ENCODE measurements at regions of chr1 and their contacts with region 1.

Region 1: GRCh38 chr1:248807067-248807737 is 18.5 kb downstream of the SH3BP5L start:
- DNase-seq: peak; percentile 68 to 75 (median 74)
- H3K4me3 ChIP-seq: peak overlapping the region in 1 of 3 experiments; percentile 70
- H3K4me3 Mint-ChIP-seq: peak overlapping the region in 1 of 2 donors; percentile 39
- H3K27ac ChIP-seq: peak overlapping the region; percentile 86 to 89
- H3K27ac Mint-ChIP-seq: peak overlapping the region; percentile 31 to 98 (median 76)
- H3K4me1 ChIP-seq: peaks cover 67 to 71% of the 10 kb centered on the region in 2 donors
- H3K4me1 Mint-ChIP-seq: peaks cover 68% of the 10 kb centered on the region
- H3K27me3 ChIP-seq: no peaks in the 10 kb centered on the region
- H3K27me3 Mint-ChIP-seq: no peaks in the 10 kb centered on the region
- CTCF ChIP-seq: peak; percentile 93

Region 2: DNA sequence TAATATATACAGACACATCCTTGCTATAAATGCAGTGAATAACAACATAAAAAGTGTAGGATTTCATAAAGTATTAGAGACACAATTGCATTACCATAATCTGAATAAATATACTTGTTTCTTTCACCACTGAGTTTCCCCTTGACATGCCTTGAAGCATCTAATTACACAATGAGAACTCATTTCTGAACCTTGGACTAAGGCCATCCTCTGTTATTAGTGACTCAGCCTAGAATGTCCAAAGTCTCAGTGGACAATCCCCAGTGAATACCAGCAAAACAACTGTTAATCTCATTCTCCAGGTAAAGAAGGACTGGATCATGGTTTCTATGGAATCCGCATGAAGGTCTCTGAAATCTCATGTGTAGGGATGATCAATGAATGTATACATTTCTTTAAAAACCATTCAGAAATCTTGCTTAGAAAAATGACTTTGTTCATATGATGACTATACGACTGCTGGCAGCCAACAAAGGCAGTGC is 793.9 kb before region 1 on chr1 and contains the start of gene OR2L5:
- intact Hi-C with region 1: no loop called
- DNase-seq: no peak
- H3K4me3 ChIP-seq: no peak within 1 kb of the TSS
- H3K4me3 Mint-ChIP-seq: no peak within 1 kb of the TSS
- H3K27ac ChIP-seq: no peak within 1 kb of the TSS
- H3K27ac Mint-ChIP-seq: no peak within 1 kb of the TSS
- H3K4me1 ChIP-seq: no peaks in the 10 kb centered on the region
- H3K4me1 Mint-ChIP-seq: no peaks in the 10 kb centered on the region
- H3K27me3 ChIP-seq: no peaks in the 10 kb centered on the region
- H3K27me3 Mint-ChIP-seq: no peaks in the 10 kb centered on the region
- CTCF ChIP-seq: no peak
- polyA plus RNA-seq, gene OR2L5: not detected

Region 3: DNA sequence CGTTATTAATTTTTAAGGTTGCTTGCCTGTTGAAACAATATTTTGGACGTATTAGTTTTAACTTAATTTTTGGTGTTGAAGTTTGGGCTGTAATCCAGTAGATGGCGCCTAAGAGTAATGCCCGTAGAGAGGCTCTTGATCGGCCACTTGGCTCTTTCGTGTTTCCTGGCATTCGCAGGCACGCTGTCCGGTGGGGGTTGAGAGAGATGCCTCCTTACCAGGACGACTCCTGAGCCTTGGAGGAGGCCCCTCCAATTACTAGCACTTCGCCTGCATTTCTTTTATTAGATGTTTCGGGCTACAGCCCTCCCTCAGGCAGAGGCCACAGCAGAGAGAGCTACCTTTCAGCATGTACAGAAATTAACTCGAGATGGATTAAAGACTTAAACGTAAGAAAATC is 564.0 kb before region 1 on chr1:
- intact Hi-C with region 1: loop called in 1 of 2 experiments (anchors 5 kb)
- DNase-seq: peak; percentile 19 to 36 (median 35)
- H3K4me3 ChIP-seq: no peak overlapping the region
- H3K4me3 Mint-ChIP-seq: peak overlapping the region in 1 of 2 donors; percentile 82
- H3K27ac ChIP-seq: no peak overlapping the region
- H3K27ac Mint-ChIP-seq: peak overlapping the region in 1 of 7 donors; percentile 75
- H3K4me1 ChIP-seq: peaks cover 13 to 16% of the 10 kb centered on the region in 2 donors
- H3K4me1 Mint-ChIP-seq: peaks cover 26% of the 10 kb centered on the region
- H3K27me3 ChIP-seq: no peaks in the 10 kb centered on the region
- H3K27me3 Mint-ChIP-seq: peaks cover 0 to 4% (median 2%) of the 10 kb centered on the region in 3 donors
- CTCF ChIP-seq: peak; percentile 85

Region 4: GRCh38 chr1:248611883-248612414 is 195.3 kb before region 1 on chr1:
- intact Hi-C with region 1: no loop called
- DNase-seq: no peak
- H3K4me3 ChIP-seq: no peak overlapping the region
- H3K4me3 Mint-ChIP-seq: no peak overlapping the region
- H3K27ac ChIP-seq: no peak overlapping the region
- H3K27ac Mint-ChIP-seq: peak overlapping the region in 1 of 7 donors; percentile 71
- H3K4me1 ChIP-seq: no peaks in the 10 kb centered on the region
- H3K4me1 Mint-ChIP-seq: peaks cover 2% of the 10 kb centered on the region
- H3K27me3 ChIP-seq: no peaks in the 10 kb centered on the region
- H3K27me3 Mint-ChIP-seq: peaks cover 0 to 4% (median 1%) of the 10 kb centered on the region in 3 donors
- CTCF ChIP-seq: no peak

Region 5: DNA sequence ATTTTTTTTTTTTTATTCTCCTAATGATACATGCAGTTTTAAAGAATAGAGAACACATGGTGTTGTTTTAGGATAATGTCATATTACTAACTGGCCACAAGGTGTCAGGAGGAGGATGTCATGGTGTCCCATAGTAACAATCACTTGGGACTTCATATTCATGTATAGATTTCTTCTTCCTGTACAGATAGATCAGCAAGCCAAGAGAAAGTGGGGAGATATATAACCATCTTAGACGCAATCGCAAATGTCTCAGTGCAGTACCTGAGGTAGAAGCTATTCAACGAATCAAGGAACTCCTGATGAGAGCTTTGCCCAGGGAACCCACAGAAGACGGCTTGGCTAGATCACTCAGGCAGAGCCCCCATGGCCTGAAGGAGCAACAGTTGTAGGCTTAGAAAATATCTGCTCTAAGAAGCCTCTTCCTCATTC is 184.6 kb before region 1 on chr1:
- intact Hi-C with region 1: loop called (anchors 5 kb)
- DNase-seq: peak; percentile 30 to 56 (median 40)
- H3K4me3 ChIP-seq: no peak overlapping the region
- H3K4me3 Mint-ChIP-seq: no peak overlapping the region
- H3K27ac ChIP-seq: no peak overlapping the region
- H3K27ac Mint-ChIP-seq: no peak overlapping the region
- H3K4me1 ChIP-seq: no peaks in the 10 kb centered on the region
- H3K4me1 Mint-ChIP-seq: no peaks in the 10 kb centered on the region
- H3K27me3 ChIP-seq: no peaks in the 10 kb centered on the region
- H3K27me3 Mint-ChIP-seq: no peaks in the 10 kb centered on the region
- CTCF ChIP-seq: peak; percentile 58

Region 6: GRCh38 chr1:248696261-248696660 is 110.9 kb before region 1 on chr1:
- intact Hi-C with region 1: loop called (anchors 2 to 5 kb)
- DNase-seq: peak in 2 of 3 donors; percentile 27 to 32
- H3K4me3 ChIP-seq: no peak overlapping the region
- H3K4me3 Mint-ChIP-seq: no peak overlapping the region
- H3K27ac ChIP-seq: no peak overlapping the region
- H3K27ac Mint-ChIP-seq: no peak overlapping the region
- H3K4me1 ChIP-seq: peaks cover 0 to 13% of the 10 kb centered on the region in 2 donors
- H3K4me1 Mint-ChIP-seq: peaks cover 11% of the 10 kb centered on the region
- H3K27me3 ChIP-seq: no peaks in the 10 kb centered on the region
- H3K27me3 Mint-ChIP-seq: peaks cover 0 to 1% (median 1%) of the 10 kb centered on the region in 3 donors
- CTCF ChIP-seq: no peak

Region 7: DNA sequence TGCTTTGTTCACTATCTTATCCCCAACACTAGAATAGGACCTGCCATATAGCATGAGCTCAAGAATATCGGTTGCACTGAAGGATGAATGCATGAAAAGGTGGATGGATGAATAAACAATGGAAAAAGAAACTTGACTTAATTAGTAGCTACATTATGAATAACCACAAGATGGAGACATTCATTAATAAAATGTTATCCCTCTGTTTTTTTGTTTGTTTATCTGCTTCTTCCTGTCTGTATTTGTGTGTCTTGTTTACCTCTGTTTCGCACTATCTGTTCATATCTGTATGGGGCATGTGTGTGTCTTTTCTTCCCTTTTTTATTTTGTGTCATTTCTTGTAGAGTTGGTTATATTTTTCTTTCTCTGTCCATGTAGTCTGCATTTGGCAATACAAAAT is 103.5 kb before region 1 on chr1:
- intact Hi-C with region 1: loop called in 1 of 2 experiments (anchors 5 kb)
- DNase-seq: peak in 1 of 3 donors; percentile 31
- H3K4me3 ChIP-seq: no peak overlapping the region
- H3K4me3 Mint-ChIP-seq: no peak overlapping the region
- H3K27ac ChIP-seq: no peak overlapping the region
- H3K27ac Mint-ChIP-seq: no peak overlapping the region
- H3K4me1 ChIP-seq: peaks cover 11 to 22% of the 10 kb centered on the region in 2 donors
- H3K4me1 Mint-ChIP-seq: peaks cover 19% of the 10 kb centered on the region
- H3K27me3 ChIP-seq: no peaks in the 10 kb centered on the region
- H3K27me3 Mint-ChIP-seq: peaks cover 0 to 3% (median 1%) of the 10 kb centered on the region in 3 donors
- CTCF ChIP-seq: peak; percentile 54

Region 8: DNA sequence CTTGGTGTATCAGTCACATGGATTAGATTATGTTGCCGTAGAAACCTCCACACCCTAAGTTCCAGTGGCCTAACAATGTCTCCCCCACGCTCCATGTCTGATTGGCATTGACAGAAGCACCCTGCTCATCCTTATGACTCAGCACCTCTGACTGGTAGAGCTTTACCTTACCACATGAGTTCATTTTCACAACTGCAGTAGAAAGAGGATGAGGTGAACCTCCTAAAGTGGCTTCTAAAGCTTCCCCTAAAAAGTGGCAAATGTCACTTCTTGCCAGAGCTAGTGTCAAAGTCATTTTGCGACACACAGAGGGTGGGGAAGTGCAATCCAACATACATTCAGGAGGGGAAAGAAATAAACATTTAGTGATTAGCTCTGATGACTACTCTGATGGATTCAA is 21.0 kb before region 1 on chr1:
- intact Hi-C with region 1: no loop called
- DNase-seq: peak; percentile 56 to 66 (median 61)
- H3K4me3 ChIP-seq: no peak overlapping the region
- H3K4me3 Mint-ChIP-seq: peak overlapping the region in 1 of 2 donors; percentile 7
- H3K27ac ChIP-seq: peak overlapping the region; percentile 11 to 62
- H3K27ac Mint-ChIP-seq: peak overlapping the region in 6 of 7 donors; percentile 9 to 85 (median 76)
- H3K4me1 ChIP-seq: peaks cover 21 to 26% of the 10 kb centered on the region in 2 donors
- H3K4me1 Mint-ChIP-seq: peaks cover 29% of the 10 kb centered on the region
- H3K27me3 ChIP-seq: no peaks in the 10 kb centered on the region
- H3K27me3 Mint-ChIP-seq: peaks cover 0 to 5% (median 0%) of the 10 kb centered on the region in 3 donors
- CTCF ChIP-seq: no peak

Region 9: DNA sequence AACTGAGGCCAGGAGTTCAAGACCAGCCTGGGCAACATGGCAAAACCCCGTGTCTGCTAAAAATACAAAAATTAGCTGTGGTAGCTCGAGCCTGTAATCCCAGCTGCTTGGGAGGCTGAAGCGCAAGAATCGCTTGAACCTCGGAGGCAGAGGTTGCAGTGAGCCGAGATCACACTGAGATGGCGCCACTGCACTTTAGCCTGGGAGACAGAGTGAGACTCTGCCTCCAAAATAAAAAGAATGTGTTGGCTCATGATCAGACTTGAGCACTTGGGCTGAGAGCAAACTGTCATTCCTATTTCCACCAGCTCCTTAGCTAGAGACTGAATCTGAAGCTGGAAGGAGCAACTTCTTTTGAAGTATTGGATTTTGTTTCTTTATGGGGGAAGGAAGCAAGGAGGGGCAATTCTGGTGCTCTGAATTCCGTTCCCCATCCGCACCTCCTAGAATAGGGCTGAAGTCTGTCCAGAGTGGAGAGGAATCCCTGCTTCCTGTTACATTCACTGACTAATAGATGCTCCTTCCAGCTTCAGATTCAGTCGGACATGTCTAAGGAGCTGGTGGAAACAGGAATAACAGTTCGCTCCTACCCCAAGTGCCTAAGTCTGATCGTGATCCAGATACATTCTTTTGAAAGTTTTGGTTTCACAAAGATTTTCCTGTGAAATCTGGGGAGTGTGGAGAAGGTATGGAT is 34.6 kb after region 1 on chr1:
- intact Hi-C with region 1: no loop called
- DNase-seq: peak in 1 of 3 donors; percentile 29
- H3K4me3 ChIP-seq: no peak overlapping the region
- H3K4me3 Mint-ChIP-seq: no peak overlapping the region
- H3K27ac ChIP-seq: peak overlapping the region in 1 of 2 donors; percentile 53
- H3K27ac Mint-ChIP-seq: peak overlapping the region in 4 of 7 donors; percentile 1 to 62 (median 44)
- H3K4me1 ChIP-seq: peaks cover 16 to 29% of the 10 kb centered on the region in 2 donors
- H3K4me1 Mint-ChIP-seq: peaks cover 22% of the 10 kb centered on the region
- H3K27me3 ChIP-seq: no peaks in the 10 kb centered on the region
- H3K27me3 Mint-ChIP-seq: no peaks in the 10 kb centered on the region
- CTCF ChIP-seq: peak; percentile 59

Measured in CD14-positive monocyte (primary cell).